Activated CD8-positive, alpha-beta memory T cell treated with anti-CD3 and anti-CD28 coated beads, Interleukin-2, amount 10 ng/mL, durations not matched to agents 7 days and 5 days (primary cell): ENCODE measurements at regions of chr19 and their contacts with region 1.

Region 1: DNA sequence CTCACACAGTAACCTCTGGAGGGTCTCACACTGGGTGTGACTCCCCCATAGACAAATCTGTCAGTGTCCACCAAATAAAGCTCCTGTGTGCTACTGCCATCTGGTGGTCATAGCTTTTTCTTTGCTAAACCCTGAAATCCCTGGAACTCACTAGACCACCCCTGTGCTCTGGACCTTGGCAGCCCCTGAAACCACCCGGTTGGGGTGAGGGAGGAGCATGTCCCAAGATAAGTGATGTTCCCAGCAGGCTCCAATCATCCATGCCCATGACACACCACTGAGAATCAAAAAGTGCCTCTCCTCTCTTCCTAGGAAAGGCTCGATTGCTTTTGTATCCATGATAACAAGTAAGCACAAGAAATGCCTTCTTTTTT is 6.5 kb upstream of the HSD17B14 start:
- DNase-seq: peak; percentile 63
- ATAC-seq: peak; percentile 52
- H3K4me3 Mint-ChIP-seq: no peak overlapping the region
- H3K27ac Mint-ChIP-seq: no peak overlapping the region
- H3K4me1 Mint-ChIP-seq: no peaks in the 10 kb centered on the region
- H3K27me3 Mint-ChIP-seq: no peaks in the 10 kb centered on the region

Region 2: DNA sequence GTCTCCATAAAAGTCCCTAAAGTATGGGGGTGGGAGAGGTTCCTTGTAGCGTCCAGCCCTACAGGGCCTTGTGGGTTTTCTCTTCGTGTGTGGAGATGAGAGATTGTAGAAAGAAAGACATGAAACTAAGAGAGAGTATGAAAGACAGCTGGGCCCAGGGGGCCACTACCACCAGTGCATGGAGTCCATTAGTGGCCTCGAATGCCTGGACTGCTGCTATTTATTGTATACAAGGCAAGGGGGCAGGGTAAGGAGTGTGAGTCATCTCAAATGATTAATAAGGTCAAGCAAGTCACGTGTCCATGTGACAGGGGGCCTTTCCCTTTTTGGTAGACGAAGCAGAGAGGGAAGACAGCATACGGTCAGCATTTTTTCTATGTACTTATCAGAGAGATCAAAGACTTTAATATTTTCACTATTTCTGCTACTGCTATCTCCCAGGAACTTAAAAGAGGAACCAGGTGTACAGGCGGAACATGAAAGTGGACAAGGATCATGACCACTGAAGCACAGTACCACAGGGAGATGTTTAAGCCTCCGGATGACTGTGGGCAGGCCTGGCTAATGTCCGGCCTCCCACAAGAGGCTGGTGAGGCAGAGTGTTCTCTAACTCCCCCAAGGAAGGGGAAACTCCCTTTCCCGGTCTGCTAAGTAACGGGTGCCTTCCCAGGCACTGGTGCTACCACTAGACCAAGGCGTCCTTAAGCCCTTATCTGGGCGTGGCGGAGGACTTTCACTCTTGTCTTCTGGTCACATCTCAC is 62.0 kb before region 1 on chr19:
- CTCF ChIA-PET with region 1: interaction called, 124 read pairs
- DNase-seq: no peak
- ATAC-seq: no peak
- H3K4me3 Mint-ChIP-seq: no peak overlapping the region
- H3K27ac Mint-ChIP-seq: no peak overlapping the region
- H3K4me1 Mint-ChIP-seq: peaks cover 6% of the 10 kb centered on the region
- H3K27me3 Mint-ChIP-seq: peaks cover 25% of the 10 kb centered on the region

Region 3: DNA sequence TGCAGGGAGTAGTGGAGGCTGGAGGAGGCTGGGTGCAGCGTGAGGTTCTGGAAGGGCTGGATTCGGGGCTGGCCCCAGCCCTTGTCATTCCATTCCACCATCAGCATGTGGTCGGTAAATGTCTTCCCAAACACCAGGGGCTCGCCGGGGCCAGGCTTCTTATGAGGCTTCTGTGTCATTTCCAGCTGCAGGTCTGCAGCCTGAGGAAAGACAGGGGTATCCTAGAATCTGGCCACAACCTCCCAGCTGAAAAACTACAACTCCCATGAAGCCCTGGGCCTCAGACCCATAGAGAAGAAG is 36.3 kb before region 1 on chr19:
- CTCF ChIA-PET with region 1: interaction called, 24 read pairs
- DNase-seq: peak; percentile 68
- ATAC-seq: no peak
- H3K4me3 Mint-ChIP-seq: no peak overlapping the region
- H3K27ac Mint-ChIP-seq: no peak overlapping the region
- H3K4me1 Mint-ChIP-seq: peaks cover 18% of the 10 kb centered on the region
- H3K27me3 Mint-ChIP-seq: no peaks in the 10 kb centered on the region

Region 4: DNA sequence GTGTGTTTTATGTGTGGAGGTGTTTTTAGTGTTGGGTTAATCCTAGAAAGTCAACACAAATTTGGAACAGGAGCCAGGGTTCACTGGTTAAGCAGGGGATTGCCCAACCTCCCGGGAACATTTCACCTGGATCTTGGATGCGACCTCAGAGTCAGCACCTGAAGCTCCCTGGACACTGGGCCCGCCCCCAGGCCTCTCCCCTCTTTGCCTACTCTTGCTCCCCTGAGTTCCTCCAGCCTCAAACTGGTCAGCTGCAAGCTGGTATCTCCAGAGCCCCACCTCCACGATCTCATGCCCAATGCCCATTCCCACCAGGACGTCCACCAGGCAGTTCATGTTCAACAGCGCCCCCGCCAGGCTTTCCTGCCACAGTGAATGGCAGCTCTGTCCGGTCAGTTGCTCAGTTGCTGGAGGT is 16.2 kb before region 1 on chr19:
- CTCF ChIA-PET with region 1: interaction called, 27 read pairs
- DNase-seq: no peak
- ATAC-seq: no peak
- H3K4me3 Mint-ChIP-seq: no peak overlapping the region
- H3K27ac Mint-ChIP-seq: no peak overlapping the region
- H3K4me1 Mint-ChIP-seq: no peaks in the 10 kb centered on the region
- H3K27me3 Mint-ChIP-seq: no peaks in the 10 kb centered on the region

Region 5: GRCh38 chr19:48872182-48872883 is 29.6 kb after region 1 on chr19 and contains the start of gene PPP1R15A:
- CTCF ChIA-PET with region 1: interaction called, 16 read pairs
- DNase-seq: peak; percentile 99
- ATAC-seq: peak; percentile 35
- H3K4me3 Mint-ChIP-seq: peak within 1 kb of the TSS; percentile 98
- H3K27ac Mint-ChIP-seq: peak within 1 kb of the TSS; percentile 100
- H3K4me1 Mint-ChIP-seq: peaks cover 39% of the 10 kb centered on the region
- H3K27me3 Mint-ChIP-seq: peaks cover 5% of the 10 kb centered on the region
- total RNA-seq, gene PPP1R15A: 32.1 to 89.7 TPM

Region 6: DNA sequence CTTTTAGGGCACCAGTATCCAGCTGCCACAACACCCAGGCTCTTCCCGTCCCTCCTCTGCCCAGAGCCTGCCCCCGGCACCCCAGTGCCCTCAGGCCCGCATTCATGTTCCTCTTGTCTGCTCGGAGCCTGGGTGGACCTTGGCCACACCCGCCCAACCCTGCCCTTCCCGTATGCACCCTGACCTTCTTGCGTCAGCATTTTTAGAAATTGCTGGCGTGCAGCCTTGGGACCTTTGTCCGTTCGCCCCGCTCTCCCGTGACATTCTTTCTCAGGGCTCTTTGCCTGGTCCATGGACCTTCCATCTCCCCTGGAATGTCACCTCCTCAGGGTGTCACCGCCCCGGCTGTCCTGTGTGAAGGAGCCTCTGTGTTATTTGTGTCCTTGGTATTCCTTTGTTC is 64.9 kb after region 1 on chr19:
- CTCF ChIA-PET with region 1: no interaction called
- DNase-seq: no peak
- ATAC-seq: no peak
- H3K4me3 Mint-ChIP-seq: no peak overlapping the region
- H3K27ac Mint-ChIP-seq: no peak overlapping the region
- H3K4me1 Mint-ChIP-seq: peaks cover 5% of the 10 kb centered on the region
- H3K27me3 Mint-ChIP-seq: no peaks in the 10 kb centered on the region

Region 7: GRCh38 chr19:48926909-48927308 is 84.1 kb after region 1 on chr19:
- CTCF ChIA-PET with region 1: no interaction called
- DNase-seq: no peak
- ATAC-seq: peak; percentile 13
- H3K4me3 Mint-ChIP-seq: no peak overlapping the region
- H3K27ac Mint-ChIP-seq: peak overlapping the region; percentile 6
- H3K4me1 Mint-ChIP-seq: peaks cover 3% of the 10 kb centered on the region
- H3K27me3 Mint-ChIP-seq: peaks cover 4% of the 10 kb centered on the region

Region 8: DNA sequence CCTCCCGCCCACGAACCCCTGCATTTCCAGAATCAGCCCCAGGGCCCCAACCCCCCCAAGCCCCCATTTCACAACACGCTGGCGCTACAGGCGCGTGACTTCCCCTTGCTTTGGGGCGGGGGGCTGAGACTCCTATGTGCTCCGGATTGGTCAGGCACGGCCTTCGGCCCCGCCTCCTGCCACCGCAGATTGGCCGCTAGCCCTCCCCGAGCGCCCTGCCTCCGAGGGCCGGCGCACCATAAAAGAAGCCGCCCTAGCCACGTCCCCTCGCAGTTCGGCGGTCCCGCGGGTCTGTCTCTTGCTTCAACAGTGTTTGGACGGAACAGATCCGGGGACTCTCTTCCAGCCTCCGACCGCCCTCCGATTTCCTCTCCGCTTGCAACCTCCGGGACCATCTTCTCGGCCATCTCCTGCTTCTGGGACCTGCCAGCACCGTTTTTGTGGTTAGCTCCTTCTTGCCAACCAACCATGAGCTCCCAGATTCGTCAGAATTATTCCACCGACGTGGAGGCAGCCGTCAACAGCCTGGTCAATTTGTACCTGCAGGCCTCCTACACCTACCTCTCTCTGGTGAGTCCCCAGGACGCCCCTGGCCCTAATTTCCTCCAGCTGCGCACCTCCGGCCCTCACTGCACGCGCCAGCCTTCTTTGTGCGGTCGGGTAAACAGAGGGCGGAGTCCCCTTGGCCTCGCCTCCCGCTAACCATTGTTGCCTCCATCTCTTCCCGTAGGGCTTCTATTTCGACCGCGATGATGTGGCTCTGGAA is 122.4 kb after region 1 on chr19 and contains the start of gene FTL:
- CTCF ChIA-PET with region 1: interaction called, 20 read pairs
- DNase-seq: peak; percentile 96
- ATAC-seq: peak; percentile 70
- H3K4me3 Mint-ChIP-seq: peak within 1 kb of the TSS; percentile 99
- H3K27ac Mint-ChIP-seq: peak within 1 kb of the TSS; percentile 97
- H3K4me1 Mint-ChIP-seq: peaks cover 67% of the 10 kb centered on the region
- H3K27me3 Mint-ChIP-seq: no peaks in the 10 kb centered on the region
- total RNA-seq, gene FTL: 1,380 to 1,403 TPM